ENCODE measurements at regions of chrX and their contacts with region 1.

Region 1: GRCh38 chrX:140514560-140514959 is 9.7 kb upstream of the SOX3 start:
- DNase-seq: no peak
- ATAC-seq: no peak
- H3K4me3 ChIP-seq: no peak overlapping the region
- H3K4me3 Mint-ChIP-seq: no peak overlapping the region
- H3K27ac ChIP-seq: no peak overlapping the region
- H3K27ac Mint-ChIP-seq: no peak overlapping the region
- H3K4me1 ChIP-seq: no peaks in the 10 kb centered on the region
- H3K4me1 Mint-ChIP-seq: no peaks in the 10 kb centered on the region
- H3K27me3 ChIP-seq: no peaks in the 10 kb centered on the region
- H3K27me3 Mint-ChIP-seq: peaks cover 10% of the 10 kb centered on the region
- CTCF ChIP-seq: no peak

Region 2: GRCh38 chrX:140467211-140467610 is 47.3 kb before region 1 on chrX:
- CTCF ChIA-PET with region 1: no interaction called
- POLR2A ChIA-PET with region 1: no interaction called
- intact Hi-C with region 1: loop called in 1 of 2 experiments (anchors 2 kb)
- DNase-seq: no peak
- ATAC-seq: no peak
- H3K4me3 ChIP-seq: no peak overlapping the region
- H3K4me3 Mint-ChIP-seq: no peak overlapping the region
- H3K27ac ChIP-seq: no peak overlapping the region
- H3K27ac Mint-ChIP-seq: no peak overlapping the region
- H3K4me1 ChIP-seq: no peaks in the 10 kb centered on the region
- H3K4me1 Mint-ChIP-seq: no peaks in the 10 kb centered on the region
- H3K27me3 ChIP-seq: no peaks in the 10 kb centered on the region
- H3K27me3 Mint-ChIP-seq: no peaks in the 10 kb centered on the region
- CTCF ChIP-seq: no peak